AG04449 (cell line): ENCODE measurements at regions of chr7 and their contacts with region 1.

Region 1: GRCh38 chr7:83410989-83411591 is 237.8 kb downstream of the SEMA3E start:
- DNase-seq: peak; percentile 7
- H3K4me3 ChIP-seq: no peak overlapping the region
- CTCF ChIP-seq: peak; percentile 42

Region 2: GRCh38 chr7:83649708-83650107 is 238.6 kb after region 1 on chr7:
- CTCF ChIA-PET with region 1: interaction called, 19 read pairs
- POLR2A ChIA-PET with region 1: no interaction called
- DNase-seq: no peak
- H3K4me3 ChIP-seq: no peak overlapping the region
- CTCF ChIP-seq: no peak

Region 3: DNA sequence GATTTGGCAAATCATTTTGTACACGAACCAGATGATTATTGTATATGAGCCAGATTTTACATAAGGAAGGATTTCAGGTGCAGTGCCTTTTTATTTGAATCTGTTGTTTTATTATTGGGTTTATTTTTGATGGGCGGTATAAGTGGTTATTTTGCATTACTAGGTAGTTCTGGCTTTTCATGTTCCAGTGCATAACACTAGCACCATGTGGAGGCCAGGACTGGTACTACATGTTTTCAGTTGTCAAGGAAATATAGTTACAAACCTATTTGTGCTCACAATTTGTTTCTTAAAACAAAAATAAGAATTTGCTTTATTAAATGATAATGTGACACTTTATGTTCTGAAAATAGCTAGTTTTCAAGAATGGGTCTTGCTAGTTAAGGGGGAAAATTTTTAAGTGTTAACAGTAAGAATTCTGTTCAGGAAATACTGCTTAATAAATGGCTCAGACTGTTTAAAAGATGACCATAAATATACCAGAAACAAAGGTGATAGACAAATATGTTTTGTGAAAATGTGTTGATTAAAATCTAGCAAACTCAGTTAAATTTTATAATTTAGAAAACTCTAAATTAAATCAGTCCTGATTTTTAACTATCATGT is 245.0 kb after region 1 on chr7:
- CTCF ChIA-PET with region 1: interaction called, 19 read pairs
- POLR2A ChIA-PET with region 1: no interaction called
- DNase-seq: peak; percentile 10
- H3K4me3 ChIP-seq: no peak overlapping the region
- CTCF ChIP-seq: peak; percentile 81